ENCODE measurements at regions of chr12 and their contacts with region 1.

Region 1: GRCh38 chr12:99479149-99479548 is 168.4 kb upstream of the GARIN6 start:
- DNase-seq: no peak
- H3K4me3 ChIP-seq: no peak overlapping the region
- H3K27ac ChIP-seq: no peak overlapping the region
- H3K4me1 ChIP-seq: no peaks in the 10 kb centered on the region
- CTCF ChIP-seq: no peak

Region 2: DNA sequence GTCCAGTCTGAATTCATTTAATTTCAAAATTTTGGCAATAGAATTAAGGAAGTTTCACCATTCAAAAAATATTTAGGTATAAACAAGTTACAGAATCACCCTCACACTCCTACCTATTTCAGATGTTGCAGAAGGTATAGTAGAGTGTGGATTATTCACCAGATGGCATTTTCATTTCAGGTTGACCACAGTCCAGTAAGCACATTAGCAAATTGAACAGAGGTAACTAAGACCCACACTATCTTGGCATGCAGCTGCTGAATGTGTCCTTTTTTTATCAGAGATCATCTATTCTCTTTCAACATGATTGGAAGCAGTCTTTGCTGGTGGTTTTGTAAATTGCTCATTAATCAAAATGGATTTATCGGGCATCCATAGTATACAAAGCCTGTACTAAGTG is 16.6 kb after region 1 on chr12:
- CTCF ChIA-PET with region 1: no interaction called
- POLR2A ChIA-PET with region 1: interaction called, 26 read pairs
- intact Hi-C with region 1: no loop called
- DNase-seq: no peak
- H3K4me3 ChIP-seq: no peak overlapping the region
- H3K27ac ChIP-seq: no peak overlapping the region
- H3K4me1 ChIP-seq: peaks cover 4% of the 10 kb centered on the region
- CTCF ChIP-seq: no peak